ENCODE measurements at regions of chr13 and their contacts with region 1.

Region 1: GRCh38 chr13:90032841-90033493 is 1314.5 kb upstream of the MIR17HG start:
- DNase-seq: no peak
- H3K4me3 ChIP-seq: no peak overlapping the region
- H3K27ac ChIP-seq: no peak overlapping the region
- H3K4me1 ChIP-seq: no peaks in the 10 kb centered on the region
- H3K27me3 ChIP-seq: no peaks in the 10 kb centered on the region
- CTCF ChIP-seq: no peak

Region 2: DNA sequence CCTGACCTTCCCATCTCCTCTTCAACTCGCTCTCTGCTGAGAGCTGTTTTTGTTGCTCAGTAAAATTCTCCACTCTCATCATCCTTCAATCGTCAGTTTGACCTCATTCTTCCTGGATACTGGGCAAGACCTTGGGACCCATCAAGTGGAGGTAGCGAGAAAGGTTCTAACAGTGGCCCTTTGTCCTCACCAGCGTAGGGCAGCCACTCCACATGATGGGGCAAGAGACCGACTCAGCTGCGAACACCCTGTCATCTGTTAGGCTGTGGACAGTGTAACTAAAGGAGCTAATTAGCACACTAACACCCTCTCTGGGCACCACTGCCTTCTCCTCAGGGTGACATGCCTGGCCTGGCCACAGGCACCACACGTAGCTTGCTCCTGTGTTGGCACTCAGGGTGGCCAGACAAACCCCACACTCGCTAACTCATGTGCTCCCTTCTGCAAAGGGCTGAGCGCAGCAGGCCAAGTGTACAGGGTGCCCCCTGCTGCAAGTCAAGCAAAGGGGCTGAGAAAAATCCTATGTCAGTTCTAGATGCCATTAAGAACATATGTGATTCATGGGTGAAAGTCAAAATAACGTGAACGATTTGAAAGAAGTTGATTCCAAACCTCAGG is 1145.8 kb before region 1 on chr13:
- CTCF ChIA-PET with region 1: no interaction called
- POLR2A ChIA-PET with region 1: no interaction called
- intact Hi-C with region 1: no loop called
- DNase-seq: no peak
- H3K4me3 ChIP-seq: no peak overlapping the region
- H3K27ac ChIP-seq: no peak overlapping the region
- H3K4me1 ChIP-seq: no peaks in the 10 kb centered on the region
- H3K27me3 ChIP-seq: no peaks in the 10 kb centered on the region
- CTCF ChIP-seq: no peak

Region 3: DNA sequence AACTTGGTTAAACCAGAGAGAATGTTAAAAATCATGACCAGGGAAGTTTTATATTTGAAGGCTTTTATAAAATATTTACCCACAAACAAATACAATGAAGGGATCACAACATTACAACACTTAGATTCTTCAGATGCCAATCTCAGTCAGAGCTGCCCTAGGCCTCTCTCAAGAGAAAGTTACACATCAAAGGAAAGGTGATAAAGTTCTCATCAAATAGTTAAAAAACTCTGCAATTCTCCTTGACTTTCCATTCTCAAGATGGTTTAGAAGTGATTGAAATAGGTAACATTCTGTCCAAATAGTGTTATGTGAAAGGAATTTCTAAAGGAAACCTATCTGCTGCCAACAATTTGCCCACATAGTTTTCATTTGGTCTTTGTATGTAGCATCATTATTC is 199.3 kb after region 1 on chr13:
- CTCF ChIA-PET with region 1: interaction called, 11 read pairs
- POLR2A ChIA-PET with region 1: no interaction called
- intact Hi-C with region 1: no loop called
- DNase-seq: no peak
- H3K4me3 ChIP-seq: no peak overlapping the region
- H3K27ac ChIP-seq: no peak overlapping the region
- H3K4me1 ChIP-seq: no peaks in the 10 kb centered on the region
- H3K27me3 ChIP-seq: no peaks in the 10 kb centered on the region
- CTCF ChIP-seq: no peak